ENCODE measurements at regions of chr10 and their contacts with region 1.

Region 1: GRCh38 chr10:91061608-91062007 is 140.7 kb upstream of the ANKRD1 start:
- DNase-seq: no peak
- ATAC-seq: no peak
- H3K4me3 ChIP-seq: no peak overlapping the region
- H3K27ac ChIP-seq: no peak overlapping the region
- H3K4me1 ChIP-seq: no peaks in the 10 kb centered on the region
- H3K27me3 ChIP-seq: peaks cover 5% of the 10 kb centered on the region; the same call in 1 of the 2 replicates
- CTCF ChIP-seq: no peak

Region 2: DNA sequence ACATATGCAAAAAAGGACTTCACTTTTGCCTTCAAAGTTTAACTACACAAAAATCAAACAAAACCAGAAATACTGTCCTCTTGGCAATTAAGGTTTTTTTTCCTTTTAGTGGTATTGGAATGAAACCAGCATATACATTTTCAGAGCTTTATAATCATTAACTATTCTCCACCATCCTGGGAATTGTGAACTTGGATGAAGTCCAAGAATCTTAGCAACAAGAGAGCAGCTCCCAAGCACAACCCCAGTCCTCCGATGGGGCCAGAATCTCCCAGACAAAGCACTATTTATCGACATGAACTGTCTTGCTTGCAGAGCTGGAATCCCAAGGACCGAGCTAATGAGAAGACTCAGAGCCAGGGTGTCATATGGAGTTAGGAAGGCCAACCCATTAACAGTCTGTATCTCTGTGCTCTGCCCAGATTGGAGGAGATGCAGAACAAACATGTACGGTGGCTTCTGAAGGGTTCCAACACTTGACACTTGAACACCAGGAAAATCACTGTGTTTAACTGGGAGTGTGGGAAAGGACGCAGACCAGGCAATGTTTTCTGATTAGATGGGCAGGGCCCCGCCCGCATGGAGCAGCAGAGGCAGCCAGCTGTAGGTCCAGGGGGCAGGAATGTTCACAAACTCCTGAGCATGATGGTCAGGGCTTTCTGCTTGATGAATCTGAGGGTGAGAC is 535.7 kb after region 1 on chr10:
- CTCF ChIA-PET with region 1: no interaction called
- POLR2A ChIA-PET with region 1: interaction called, 23 read pairs
- intact Hi-C with region 1: no loop called
- DNase-seq: peak; percentile 22
- ATAC-seq: no peak
- H3K4me3 ChIP-seq: no peak overlapping the region
- H3K27ac ChIP-seq: peak overlapping the region; percentile 87
- H3K4me1 ChIP-seq: peaks cover 34% of the 10 kb centered on the region
- H3K27me3 ChIP-seq: no peaks in the 10 kb centered on the region
- CTCF ChIP-seq: no peak

Measured in PC-3 (cell line).